WTC11 (cell line): ENCODE measurements at regions of chr6 and their contacts with region 1.

Region 1: DNA sequence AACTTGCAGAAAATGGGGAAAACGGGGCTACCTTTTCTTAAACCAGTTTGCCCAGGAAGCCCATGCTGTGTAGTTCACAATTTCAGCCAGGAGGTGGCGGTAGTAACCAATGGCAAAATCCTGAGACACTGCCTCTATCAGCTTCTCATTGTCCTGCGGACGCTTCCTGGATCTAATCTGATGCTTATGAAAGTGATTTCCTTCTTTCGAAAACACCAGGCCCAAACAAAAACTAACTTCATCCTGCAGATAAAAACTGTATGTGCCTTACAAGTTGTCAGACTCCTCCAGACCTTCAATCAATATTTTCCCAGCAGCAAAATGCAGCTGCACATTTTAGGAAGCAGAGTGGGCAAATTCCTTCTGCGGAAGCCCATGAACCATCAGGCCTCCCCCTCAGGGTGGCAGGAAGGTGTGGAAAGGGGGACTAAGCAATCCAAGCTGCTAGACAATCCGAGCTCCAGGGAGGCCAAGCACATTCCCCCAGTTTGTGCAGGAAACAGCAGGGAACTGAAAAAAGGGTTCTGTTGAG is 88.5 kb downstream of the LY86 start:
- DNase-seq: peak; percentile 86
- ATAC-seq: peak; percentile 69
- H3K4me3 Mint-ChIP-seq: 0 out of 2 replicates have a peak overlapping the region, but pooled peaks have one; percentile 16
- H3K27ac Mint-ChIP-seq: peak overlapping the region; percentile 39
- H3K4me1 Mint-ChIP-seq: peaks cover 29% of the 10 kb centered on the region
- H3K27me3 Mint-ChIP-seq: no peaks in the 10 kb centered on the region
- CTCF ChIP-seq: peak; percentile 95

Region 2: DNA sequence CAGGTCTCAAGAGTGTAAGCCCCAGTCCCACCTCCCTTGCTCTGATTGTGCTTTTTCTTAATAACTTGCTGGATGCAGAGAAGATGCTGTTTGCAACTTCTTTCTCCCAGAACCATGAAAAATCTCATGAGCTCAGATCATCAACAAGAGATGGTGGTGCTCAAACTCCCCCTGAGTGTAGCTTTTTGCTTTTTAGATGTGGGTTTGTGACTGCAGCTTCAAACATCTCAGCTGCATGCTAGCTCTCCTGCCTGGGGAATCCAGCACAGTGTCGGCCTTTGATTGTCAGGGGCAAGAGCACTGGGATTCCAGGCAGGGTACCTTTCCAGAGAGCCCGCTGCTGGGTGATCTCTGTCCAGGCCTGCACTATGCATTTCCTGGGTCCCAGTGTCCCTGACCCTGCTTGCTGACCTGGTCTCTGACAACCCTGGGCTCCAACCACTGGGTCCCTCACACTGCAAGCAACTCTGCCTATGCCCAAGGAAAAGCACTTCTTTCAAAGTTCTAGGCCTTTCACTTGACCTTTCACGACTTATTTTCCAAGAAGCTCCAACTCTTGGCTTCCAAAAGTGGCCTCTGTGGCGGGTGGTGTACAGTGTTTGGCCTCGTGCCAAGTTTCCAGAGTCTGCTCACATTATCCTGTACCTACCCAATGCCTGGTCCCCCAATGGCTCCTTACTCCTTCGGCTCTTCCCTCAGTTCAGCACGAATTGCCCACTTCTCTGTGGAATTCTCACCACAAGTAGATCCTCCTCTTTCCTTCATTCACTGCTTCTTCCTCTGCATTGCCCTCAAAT is 158.1 kb before region 1 on chr6:
- CTCF ChIA-PET with region 1: no interaction called
- POLR2A ChIA-PET with region 1: no interaction called
- DNase-seq: no peak
- ATAC-seq: no peak
- H3K4me3 Mint-ChIP-seq: no peak overlapping the region
- H3K27ac Mint-ChIP-seq: no peak overlapping the region
- H3K4me1 Mint-ChIP-seq: peaks cover 12% of the 10 kb centered on the region
- H3K27me3 Mint-ChIP-seq: peaks cover 3% of the 10 kb centered on the region
- CTCF ChIP-seq: no peak

Region 3: GRCh38 chr6:6665555-6666243 is 11.3 kb before region 1 on chr6:
- CTCF ChIA-PET with region 1: interaction called, 12 read pairs
- POLR2A ChIA-PET with region 1: no interaction called
- DNase-seq: no peak
- ATAC-seq: peak; percentile 50
- H3K4me3 Mint-ChIP-seq: no peak overlapping the region
- H3K27ac Mint-ChIP-seq: no peak overlapping the region
- H3K4me1 Mint-ChIP-seq: peaks cover 6% of the 10 kb centered on the region
- H3K27me3 Mint-ChIP-seq: peaks cover 4% of the 10 kb centered on the region; the same call in 1 of the 2 replicates
- CTCF ChIP-seq: no peak